Activated CD4-positive, alpha-beta T cell treated with anti-CD3 and anti-CD28 coated beads for 36 hours (primary cell): ENCODE measurements at regions of chr1 and their contacts with region 1.

Region 1: GRCh38 chr1:176897350-176898236 is 266.9 kb downstream of the ASTN1 start:
- DNase-seq: peak; percentile 73
- ATAC-seq: peak; percentile 30
- H3K4me3 Mint-ChIP-seq: no peak overlapping the region
- H3K27ac Mint-ChIP-seq: no peak overlapping the region
- H3K4me1 Mint-ChIP-seq: peaks cover 4% of the 10 kb centered on the region
- H3K27me3 Mint-ChIP-seq: peaks cover 6% of the 10 kb centered on the region

Region 2: GRCh38 chr1:176374967-176375569 is 522.5 kb before region 1 on chr1:
- CTCF ChIA-PET with region 1: no interaction called
- POLR2A ChIA-PET with region 1: no interaction called
- intact Hi-C with region 1: loop called in 1 of 2 experiments (anchors 5 kb)
- DNase-seq: peak; percentile 84
- ATAC-seq: peak; percentile 65
- H3K4me3 Mint-ChIP-seq: no peak overlapping the region
- H3K27ac Mint-ChIP-seq: no peak overlapping the region
- H3K4me1 Mint-ChIP-seq: no peaks in the 10 kb centered on the region
- H3K27me3 Mint-ChIP-seq: peaks cover 8% of the 10 kb centered on the region

Region 3: GRCh38 chr1:177181631-177182291 is 284.2 kb after region 1 on chr1:
- CTCF ChIA-PET with region 1: no interaction called
- POLR2A ChIA-PET with region 1: no interaction called
- intact Hi-C with region 1: loop called (anchors 1 kb)
- DNase-seq: peak; percentile 64
- ATAC-seq: peak; percentile 36
- H3K4me3 Mint-ChIP-seq: peak overlapping the region; percentile 29
- H3K27ac Mint-ChIP-seq: no peak overlapping the region
- H3K4me1 Mint-ChIP-seq: peaks cover 8% of the 10 kb centered on the region
- H3K27me3 Mint-ChIP-seq: peaks cover 20% of the 10 kb centered on the region

Region 4: DNA sequence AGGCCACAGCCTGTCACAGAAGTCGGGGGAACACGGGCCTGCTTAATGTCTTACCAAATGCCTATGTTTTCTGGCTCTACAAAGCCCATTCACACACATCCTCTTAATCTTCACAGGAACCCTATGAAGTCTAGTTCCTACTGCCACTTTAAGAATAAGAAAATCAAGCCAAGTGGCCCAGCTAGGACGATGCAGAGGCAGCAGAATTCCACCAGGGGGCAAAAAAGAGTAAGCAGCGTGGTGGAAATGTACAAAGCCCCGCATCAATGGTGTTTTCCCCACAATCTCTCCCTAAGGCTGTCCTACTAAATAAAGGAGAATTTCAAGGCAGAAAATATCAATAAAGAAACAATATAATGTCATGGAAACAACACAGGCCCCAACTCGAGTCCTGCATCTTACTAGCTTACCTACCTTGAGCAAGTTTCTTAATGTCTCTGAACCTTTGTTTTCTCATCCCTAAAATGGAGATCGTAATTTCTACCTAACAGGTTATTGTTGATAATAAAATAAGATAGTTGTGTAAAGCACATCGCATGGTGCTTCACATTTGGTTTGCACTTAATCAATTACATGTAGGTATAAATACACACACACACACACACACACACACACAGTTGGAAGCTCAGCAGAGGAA is 1050.9 kb after region 1 on chr1:
- CTCF ChIA-PET with region 1: interaction called, 4 read pairs
- POLR2A ChIA-PET with region 1: no interaction called
- intact Hi-C with region 1: loop called (anchors 1 to 5 kb)
- DNase-seq: peak; percentile 46
- ATAC-seq: peak; percentile 51
- H3K4me3 Mint-ChIP-seq: no peak overlapping the region
- H3K27ac Mint-ChIP-seq: no peak overlapping the region
- H3K4me1 Mint-ChIP-seq: no peaks in the 10 kb centered on the region
- H3K27me3 Mint-ChIP-seq: no peaks in the 10 kb centered on the region